Activated naive CD4-positive, alpha-beta T cell treated with anti-CD3 and anti-CD28 coated beads for 36 hours (primary cell): ENCODE measurements at regions of chr9 and their contacts with region 1.

Region 1: DNA sequence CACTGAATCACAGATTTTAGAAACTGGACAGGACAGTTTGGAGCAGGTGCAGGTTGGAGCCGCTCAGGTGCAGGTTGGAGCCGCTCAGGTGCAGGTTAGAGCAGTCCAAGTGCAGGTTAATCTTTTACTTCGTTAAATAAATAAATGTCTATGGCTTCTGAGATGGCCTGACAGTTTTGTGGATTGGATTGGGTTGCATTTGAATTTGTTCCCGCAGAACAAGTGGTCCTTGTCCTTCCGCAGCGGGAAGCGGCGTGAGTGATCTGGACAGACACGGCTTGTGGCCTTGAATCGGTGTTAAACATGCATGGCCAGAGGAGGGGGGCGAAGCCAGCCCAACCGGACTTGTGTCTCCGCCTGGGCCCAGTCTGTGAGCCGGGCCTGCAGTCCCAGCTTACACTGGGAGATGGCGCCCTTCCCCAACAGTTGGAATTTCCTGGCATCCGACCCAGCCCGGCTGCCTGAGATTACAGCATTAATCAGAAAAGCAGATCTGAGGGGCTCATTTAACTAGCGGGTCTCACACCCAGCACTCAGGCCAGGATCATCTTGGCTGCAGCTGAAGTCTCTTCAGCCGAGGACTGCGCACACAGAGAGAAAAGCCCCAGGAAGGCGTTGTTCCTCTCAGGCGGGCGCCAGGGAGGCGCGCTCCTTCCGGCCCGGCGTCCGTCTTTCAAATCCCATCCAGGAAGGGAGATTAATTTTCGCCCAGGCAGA is 1.5 kb upstream of the OLFM1 start:
- DNase-seq: peak; percentile 69
- H3K4me3 Mint-ChIP-seq: no peak overlapping the region
- H3K27ac Mint-ChIP-seq: no peak overlapping the region
- H3K4me1 Mint-ChIP-seq: peaks cover 6% of the 10 kb centered on the region
- H3K27me3 Mint-ChIP-seq: peaks cover 46% of the 10 kb centered on the region

Region 2: DNA sequence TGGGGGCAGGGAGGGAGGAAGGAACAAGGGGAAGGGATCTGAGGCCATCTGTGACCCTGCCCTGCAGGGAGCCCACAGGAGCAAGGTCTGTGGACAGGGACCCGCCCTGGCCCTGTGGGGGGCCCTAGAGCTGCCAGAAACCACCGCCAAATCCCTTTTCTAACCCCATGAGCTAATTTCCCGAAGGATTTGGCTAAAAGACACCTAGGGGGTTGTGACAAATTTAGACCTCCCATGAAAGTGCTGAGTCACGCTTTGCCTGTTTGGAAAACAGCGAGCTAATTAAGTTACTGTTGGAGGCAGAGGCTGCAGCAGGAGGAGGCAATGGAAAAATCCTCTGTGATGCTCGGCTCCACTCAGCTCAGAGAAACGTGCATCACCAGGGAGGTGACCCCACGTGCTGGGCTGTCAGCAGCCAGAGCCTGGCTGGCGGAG is 51.4 kb after region 1 on chr9:
- CTCF ChIA-PET with region 1: no interaction called
- intact Hi-C with region 1: no loop called
- DNase-seq: no peak
- H3K4me3 Mint-ChIP-seq: no peak overlapping the region
- H3K27ac Mint-ChIP-seq: no peak overlapping the region
- H3K4me1 Mint-ChIP-seq: no peaks in the 10 kb centered on the region
- H3K27me3 Mint-ChIP-seq: peaks cover 15% of the 10 kb centered on the region

Region 3: GRCh38 chr9:135343837-135344522 is 258.0 kb after region 1 on chr9:
- CTCF ChIA-PET with region 1: no interaction called
- intact Hi-C with region 1: loop called (anchors 1 kb)
- DNase-seq: peak; percentile 54
- H3K4me3 Mint-ChIP-seq: no peak overlapping the region
- H3K27ac Mint-ChIP-seq: no peak overlapping the region
- H3K4me1 Mint-ChIP-seq: no peaks in the 10 kb centered on the region
- H3K27me3 Mint-ChIP-seq: peaks cover 4% of the 10 kb centered on the region

Region 4: DNA sequence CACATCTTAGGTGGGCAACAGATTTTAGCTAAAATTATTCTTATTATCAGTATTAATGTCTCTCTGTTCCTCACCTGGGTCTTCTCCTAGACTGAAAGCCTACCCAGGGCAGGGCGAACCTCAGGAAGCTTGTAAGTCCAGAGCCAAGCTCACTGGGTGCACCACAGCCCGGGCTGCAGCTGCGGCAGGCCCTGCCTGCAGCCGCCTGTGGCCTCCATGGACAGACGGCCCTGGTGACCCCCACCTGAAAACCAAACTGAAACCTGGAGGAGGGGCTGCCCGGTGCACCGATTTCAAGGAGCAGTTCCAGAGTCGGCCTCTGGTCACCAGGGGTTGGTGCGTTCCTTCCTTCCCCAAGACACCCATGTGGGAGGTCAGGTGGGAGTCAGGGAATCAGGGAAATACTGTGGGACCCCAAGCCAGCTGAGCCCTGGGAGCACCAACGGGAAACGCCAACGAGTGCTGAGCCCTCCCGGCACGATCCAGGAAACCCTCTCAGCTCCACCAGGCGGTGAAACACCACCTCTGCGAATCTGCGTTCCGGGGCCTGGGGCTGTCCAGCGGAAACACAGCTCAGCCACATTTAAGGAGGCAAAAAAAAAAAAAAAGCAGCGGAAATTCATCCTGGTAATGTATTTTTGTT is 325.0 kb after region 1 on chr9:
- CTCF ChIA-PET with region 1: interaction called, 3 read pairs
- intact Hi-C with region 1: loop called (anchors 1 kb)
- DNase-seq: no peak
- H3K4me3 Mint-ChIP-seq: no peak overlapping the region
- H3K27ac Mint-ChIP-seq: no peak overlapping the region
- H3K4me1 Mint-ChIP-seq: no peaks in the 10 kb centered on the region
- H3K27me3 Mint-ChIP-seq: peaks cover 8% of the 10 kb centered on the region